ENCODE measurements at regions of chr1 and their contacts with region 1.

Region 1: DNA sequence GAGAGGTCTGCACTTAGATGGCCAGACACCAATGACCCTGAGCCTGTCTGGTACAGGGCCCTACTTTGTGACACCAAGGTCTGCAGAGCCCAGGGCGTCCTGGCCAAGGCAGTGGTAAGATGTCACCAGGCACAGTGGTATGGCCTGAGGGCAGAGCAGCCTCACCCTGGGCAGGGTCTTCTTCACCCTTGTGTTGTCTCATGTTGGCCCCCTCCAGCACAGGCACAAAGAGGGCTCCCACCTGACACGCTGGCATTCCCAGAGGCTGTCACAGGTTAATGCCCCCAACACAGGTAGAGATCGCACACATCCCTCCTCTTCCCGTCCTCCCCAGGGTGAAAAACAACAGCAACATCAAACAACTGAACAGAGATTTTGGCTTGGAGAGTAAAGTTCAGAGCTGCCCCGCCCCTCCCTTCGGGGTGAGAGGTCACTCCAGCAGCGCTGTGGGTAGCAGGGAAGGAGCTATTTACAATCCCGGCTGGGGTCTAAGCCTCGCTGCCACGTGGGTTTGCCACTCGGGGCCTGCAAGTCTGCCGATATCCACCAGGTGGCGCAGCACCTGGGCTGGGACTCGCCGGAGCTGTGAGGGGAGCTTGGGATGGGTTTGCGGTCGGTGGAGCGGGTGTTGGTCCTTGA is 12.6 kb downstream of the EFNA3 start:
- DNase-seq: peak; percentile 85
- ATAC-seq: peak; percentile 84
- H3K4me3 Mint-ChIP-seq: no peak overlapping the region
- H3K27ac Mint-ChIP-seq: no peak overlapping the region
- H3K4me1 Mint-ChIP-seq: peaks cover 9% of the 10 kb centered on the region
- H3K27me3 Mint-ChIP-seq: peaks cover 16% of the 10 kb centered on the region

Region 2: DNA sequence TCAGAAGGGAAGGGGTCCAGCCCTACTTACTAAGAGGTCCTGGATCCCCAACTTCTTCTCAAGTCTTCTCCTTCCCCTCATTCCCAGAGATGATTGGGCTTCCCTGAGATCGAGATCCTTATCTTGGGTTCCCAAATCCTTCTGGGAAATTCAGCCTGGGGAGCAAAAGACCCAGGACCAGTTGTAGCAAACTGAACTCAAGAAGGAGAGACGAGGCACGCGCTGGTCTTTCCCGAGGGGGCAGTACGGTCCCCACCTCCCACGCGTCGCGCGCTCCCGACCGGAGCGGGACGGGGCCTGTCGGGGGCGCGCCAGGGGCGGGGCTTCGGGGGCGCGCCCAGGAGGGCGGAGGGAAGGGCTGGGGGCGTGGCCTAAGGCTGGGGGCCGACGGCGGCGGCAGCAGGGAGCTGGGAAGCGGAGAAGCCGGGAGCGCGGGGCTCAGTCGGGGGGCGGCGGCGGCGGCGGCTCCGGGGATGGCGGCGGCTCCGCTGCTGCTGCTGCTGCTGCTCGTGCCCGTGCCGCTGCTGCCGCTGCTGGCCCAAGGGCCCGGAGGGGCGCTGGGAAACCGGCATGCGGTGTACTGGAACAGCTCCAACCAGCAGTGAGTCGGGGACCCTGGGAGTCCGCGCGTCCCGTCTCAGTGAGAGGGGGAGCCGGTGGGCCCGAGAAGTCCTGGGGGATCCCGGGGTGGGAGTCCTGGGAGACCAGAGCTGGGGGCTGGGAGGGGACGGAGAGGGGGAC is 12.6 kb before region 1 on chr1 and contains the start of gene EFNA3:
- CTCF ChIA-PET with region 1: interaction called, 112 read pairs
- POLR2A ChIA-PET with region 1: no interaction called
- DNase-seq: peak; percentile 60
- ATAC-seq: peak; percentile 21
- H3K4me3 Mint-ChIP-seq: peak within 1 kb of the TSS; percentile 59
- H3K27ac Mint-ChIP-seq: peak within 1 kb of the TSS; percentile 56
- H3K4me1 Mint-ChIP-seq: peaks cover 69% of the 10 kb centered on the region
- H3K27me3 Mint-ChIP-seq: peaks cover 39% of the 10 kb centered on the region
- total RNA-seq, gene EFNA3: 3.8 to 5.5 TPM

Region 3: DNA sequence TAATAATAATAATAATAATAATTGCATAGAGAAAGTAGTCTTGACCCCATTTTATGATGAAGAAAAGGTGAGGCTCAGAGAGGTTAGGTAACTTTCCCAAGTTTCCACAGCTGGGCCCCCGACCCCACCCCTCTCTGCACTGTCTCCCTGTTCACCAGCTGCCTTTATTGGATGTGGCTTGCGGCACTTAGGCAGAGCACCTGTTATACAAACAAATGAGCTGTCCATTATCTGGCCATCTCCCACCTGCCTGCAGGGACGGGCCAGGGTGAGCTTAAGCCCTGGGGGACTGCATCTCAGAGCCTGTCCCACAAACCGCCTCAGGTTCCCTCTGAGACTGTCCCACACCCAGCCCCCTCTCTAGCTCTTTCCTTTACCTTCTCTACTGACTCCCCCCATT is 26.4 kb after region 1 on chr1:
- CTCF ChIA-PET with region 1: interaction called, 10 read pairs
- POLR2A ChIA-PET with region 1: no interaction called
- DNase-seq: no peak
- ATAC-seq: no peak
- H3K4me3 Mint-ChIP-seq: no peak overlapping the region
- H3K27ac Mint-ChIP-seq: no peak overlapping the region
- H3K4me1 Mint-ChIP-seq: no peaks in the 10 kb centered on the region
- H3K27me3 Mint-ChIP-seq: peaks cover 24% of the 10 kb centered on the region

Region 4: GRCh38 chr1:155135415-155136028 is 44.3 kb after region 1 on chr1 and contains the start of gene SLC50A1:
- CTCF ChIA-PET with region 1: interaction called, 18 read pairs
- POLR2A ChIA-PET with region 1: interaction called, 3 read pairs
- DNase-seq: peak; percentile 95
- ATAC-seq: peak; percentile 84
- H3K4me3 Mint-ChIP-seq: peak within 1 kb of the TSS; percentile 98
- H3K27ac Mint-ChIP-seq: peak within 1 kb of the TSS; percentile 99
- H3K4me1 Mint-ChIP-seq: peaks cover 47% of the 10 kb centered on the region
- H3K27me3 Mint-ChIP-seq: no peaks in the 10 kb centered on the region
- total RNA-seq, gene SLC50A1: 37.5 to 38.9 TPM

Measured in activated CD8-positive, alpha-beta T cell treated with anti-CD3 and anti-CD28 coated beads, Interleukin-2, amount 10 ng/mL, durations not matched to agents 7 days and 5 days (primary cell).